Heart left ventricle (tissue), 16 donors: ENCODE measurements at regions of chr21 and their contacts with region 1.

Region 1: GRCh38 chr21:41460578-41461527 is 34.8 kb downstream of the MX1 start:
- DNase-seq: peak; percentile 56 to 83 (median 81)
- ATAC-seq: peak in 3 of 4 donors; percentile 90 to 91 (median 90)
- H3K4me3 ChIP-seq: no peak overlapping the region
- H3K27ac ChIP-seq: no peak overlapping the region
- H3K4me1 ChIP-seq: peaks cover 0 to 2% (median 0%) of the 10 kb centered on the region in 12 donors
- H3K27me3 ChIP-seq: peaks cover 0 to 2% (median 0%) of the 10 kb centered on the region in 9 donors
- CTCF ChIP-seq: peak; percentile 64 to 85 (median 78)
- POLR2A ChIP-seq: no peak

Region 2: GRCh38 chr21:41121785-41122421 is 338.9 kb before region 1 on chr21:
- intact Hi-C with region 1: loop called (anchors 2 to 10 kb)
- DNase-seq: peak; percentile 74 to 85 (median 80)
- ATAC-seq: peak; percentile 47 to 88 (median 86)
- H3K4me3 ChIP-seq: no peak overlapping the region
- H3K27ac ChIP-seq: no peak overlapping the region
- H3K4me1 ChIP-seq: peaks cover 0 to 9% (median 0%) of the 10 kb centered on the region in 12 donors
- H3K27me3 ChIP-seq: peaks cover 0 to 26% (median 5%) of the 10 kb centered on the region in 9 donors
- CTCF ChIP-seq: peak; percentile 78 to 93 (median 88)
- POLR2A ChIP-seq: no peak